ENCODE measurements at regions of chr15 and their contacts with region 1.

Region 1: GRCh38 chr15:98035577-98036010 is 75.1 kb downstream of the ARRDC4 start:
- DNase-seq: peak; percentile 83
- H3K4me3 ChIP-seq: peak overlapping the region in 2 of 3 experiments; percentile 20 to 29
- H3K27ac ChIP-seq: peak overlapping the region; percentile 94
- H3K4me1 ChIP-seq: peaks cover 21% of the 10 kb centered on the region
- H3K27me3 ChIP-seq: no peaks in the 10 kb centered on the region
- CTCF ChIP-seq: no peak

Region 2: DNA sequence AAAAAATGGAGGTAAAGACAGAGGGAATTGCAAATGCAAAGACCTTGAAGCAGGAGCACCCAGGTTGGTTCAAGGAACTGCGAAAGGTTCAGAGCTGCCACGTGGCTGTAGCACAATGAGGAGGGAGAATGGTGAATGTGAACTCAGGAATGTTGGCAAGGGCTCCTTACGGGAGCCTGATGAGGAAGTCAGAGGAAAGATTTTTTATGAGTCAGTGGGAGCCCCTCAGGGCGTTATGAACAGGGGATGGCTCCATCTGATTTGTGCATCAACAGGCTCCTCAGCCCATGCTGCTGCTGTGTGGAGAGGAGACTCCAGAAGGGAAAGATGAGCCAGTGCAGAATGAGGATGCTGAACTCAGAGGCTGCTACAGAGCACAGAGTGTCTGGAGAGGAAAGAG is 119.3 kb after region 1 on chr15:
- CTCF ChIA-PET with region 1: interaction called, 11 read pairs
- dilution Hi-C with region 1: no loop called
- in situ Hi-C with region 1: no loop called
- intact Hi-C with region 1: no loop called
- DNase-seq: peak; percentile 96
- H3K4me3 ChIP-seq: no peak overlapping the region
- H3K27ac ChIP-seq: peak overlapping the region; percentile 86
- H3K4me1 ChIP-seq: peaks cover 36% of the 10 kb centered on the region
- H3K27me3 ChIP-seq: no peaks in the 10 kb centered on the region
- CTCF ChIP-seq: no peak

Region 3: GRCh38 chr15:98286831-98287230 is 251.2 kb after region 1 on chr15:
- CTCF ChIA-PET with region 1: no interaction called
- dilution Hi-C with region 1: no loop called
- in situ Hi-C with region 1: no loop called
- intact Hi-C with region 1: no loop called
- DNase-seq: peak; percentile 12
- H3K4me3 ChIP-seq: no peak overlapping the region
- H3K27ac ChIP-seq: no peak overlapping the region
- H3K4me1 ChIP-seq: no peaks in the 10 kb centered on the region
- H3K27me3 ChIP-seq: no peaks in the 10 kb centered on the region
- CTCF ChIP-seq: no peak

Region 4: DNA sequence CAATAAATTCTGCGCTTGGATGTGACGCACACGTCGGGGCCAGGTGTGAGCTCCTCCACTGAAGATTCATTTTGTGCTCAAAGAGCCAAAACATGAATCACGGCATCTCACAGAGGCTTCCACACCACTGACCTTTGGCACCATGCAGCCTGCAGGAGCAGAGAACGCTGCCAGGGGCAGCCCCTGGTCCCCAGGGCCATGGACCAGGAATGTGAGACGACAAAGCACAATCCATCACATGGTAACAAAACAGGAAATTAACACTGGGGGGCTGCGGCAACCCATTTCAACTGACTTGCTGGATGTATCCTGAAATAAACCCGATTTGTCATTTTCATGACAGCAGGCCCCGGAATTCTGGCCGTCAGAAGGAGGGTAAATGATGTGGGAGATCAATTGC is 445.2 kb after region 1 on chr15:
- CTCF ChIA-PET with region 1: no interaction called
- dilution Hi-C with region 1: no loop called
- in situ Hi-C with region 1: no loop called
- intact Hi-C with region 1: no loop called
- DNase-seq: no peak
- H3K4me3 ChIP-seq: no peak overlapping the region
- H3K27ac ChIP-seq: no peak overlapping the region
- H3K4me1 ChIP-seq: no peaks in the 10 kb centered on the region
- H3K27me3 ChIP-seq: peaks cover 1% of the 10 kb centered on the region
- CTCF ChIP-seq: no peak